ENCODE measurements at regions of chr9 and their contacts with region 1.

Region 1: GRCh38 chr9:124617471-124618141 is 110.4 kb upstream of the NR5A1 start:
- DNase-seq: peak; percentile 77 to 84
- ATAC-seq: peak; percentile 61 to 80 (median 72)
- H3K4me3 ChIP-seq: no peak overlapping the region
- H3K4me3 Mint-ChIP-seq: peak overlapping the region; percentile 80
- H3K27ac ChIP-seq: no peak overlapping the region
- H3K27ac Mint-ChIP-seq: peak overlapping the region; percentile 27 to 86
- H3K4me1 ChIP-seq: peaks cover 31% of the 10 kb centered on the region
- H3K4me1 Mint-ChIP-seq: peaks cover 43 to 47% of the 10 kb centered on the region in 2 donors
- H3K27me3 ChIP-seq: no peaks in the 10 kb centered on the region
- H3K27me3 Mint-ChIP-seq: no peaks in the 10 kb centered on the region
- CTCF ChIP-seq: peak; percentile 77

Region 2: DNA sequence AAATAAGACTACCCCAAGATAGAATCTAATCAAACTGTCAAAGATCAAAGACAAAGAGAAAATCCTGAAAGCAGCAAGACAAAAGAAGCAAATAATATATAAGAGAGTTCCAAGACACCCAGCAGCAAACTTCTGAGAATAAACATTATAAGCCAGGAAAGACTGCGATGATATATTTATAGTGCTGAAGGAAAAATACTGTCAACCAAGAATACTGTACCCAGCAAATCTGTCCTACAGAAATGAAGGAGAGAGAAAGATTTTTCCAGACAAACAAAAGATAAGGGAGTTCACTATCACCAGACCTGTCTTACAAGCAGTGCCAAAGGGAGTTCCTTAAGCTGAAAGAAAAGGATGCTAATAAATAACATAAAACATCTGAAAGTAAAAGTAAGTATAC is 915.1 kb before region 1 on chr9:
- intact Hi-C with region 1: no loop called
- DNase-seq: no peak
- ATAC-seq: no peak
- H3K4me3 ChIP-seq: no peak overlapping the region
- H3K4me3 Mint-ChIP-seq: no peak overlapping the region
- H3K27ac ChIP-seq: no peak overlapping the region
- H3K27ac Mint-ChIP-seq: no peak overlapping the region
- H3K4me1 ChIP-seq: no peaks in the 10 kb centered on the region
- H3K4me1 Mint-ChIP-seq: peaks cover 4 to 5% of the 10 kb centered on the region in 2 donors
- H3K27me3 ChIP-seq: no peaks in the 10 kb centered on the region
- H3K27me3 Mint-ChIP-seq: no peaks in the 10 kb centered on the region
- CTCF ChIP-seq: no peak

Region 3: DNA sequence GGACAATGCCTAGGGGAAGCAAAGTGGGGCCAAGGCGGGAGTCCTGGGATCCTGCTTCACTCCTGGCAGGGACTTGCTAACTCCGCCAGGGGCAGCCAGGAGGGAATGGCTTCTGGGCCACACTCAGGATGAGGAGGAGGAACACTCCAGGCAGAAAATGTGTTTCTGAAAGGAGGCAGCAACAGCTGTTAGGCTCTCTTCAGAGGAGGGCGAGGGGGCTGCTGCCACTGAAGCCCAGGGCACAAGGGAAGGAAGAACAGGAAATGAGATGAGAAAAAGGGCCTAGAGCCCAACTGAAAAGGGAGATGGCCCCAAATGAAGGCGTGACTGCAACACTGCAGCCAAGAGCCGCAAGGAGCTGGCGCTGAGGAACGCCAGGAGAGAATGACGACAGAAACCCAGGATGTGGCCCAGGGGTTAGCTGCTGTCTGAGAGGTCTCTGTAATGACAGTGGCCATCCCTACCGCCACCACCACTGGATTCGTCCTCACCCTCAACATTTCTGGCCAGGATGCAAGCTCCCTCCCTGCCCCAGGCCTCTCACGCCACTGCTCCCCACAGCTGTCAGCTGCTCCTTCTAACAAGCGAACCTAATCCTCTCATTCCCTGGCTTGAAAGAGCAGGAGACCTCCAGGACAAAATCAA is 218.2 kb before region 1 on chr9:
- intact Hi-C with region 1: no loop called
- DNase-seq: no peak
- ATAC-seq: no peak
- H3K4me3 ChIP-seq: no peak overlapping the region
- H3K4me3 Mint-ChIP-seq: no peak overlapping the region
- H3K27ac ChIP-seq: no peak overlapping the region
- H3K27ac Mint-ChIP-seq: peak overlapping the region in 1 of 2 donors; percentile 69
- H3K4me1 ChIP-seq: no peaks in the 10 kb centered on the region
- H3K4me1 Mint-ChIP-seq: peaks cover 24 to 45% of the 10 kb centered on the region in 2 donors
- H3K27me3 ChIP-seq: no peaks in the 10 kb centered on the region
- H3K27me3 Mint-ChIP-seq: no peaks in the 10 kb centered on the region
- CTCF ChIP-seq: no peak

Region 4: DNA sequence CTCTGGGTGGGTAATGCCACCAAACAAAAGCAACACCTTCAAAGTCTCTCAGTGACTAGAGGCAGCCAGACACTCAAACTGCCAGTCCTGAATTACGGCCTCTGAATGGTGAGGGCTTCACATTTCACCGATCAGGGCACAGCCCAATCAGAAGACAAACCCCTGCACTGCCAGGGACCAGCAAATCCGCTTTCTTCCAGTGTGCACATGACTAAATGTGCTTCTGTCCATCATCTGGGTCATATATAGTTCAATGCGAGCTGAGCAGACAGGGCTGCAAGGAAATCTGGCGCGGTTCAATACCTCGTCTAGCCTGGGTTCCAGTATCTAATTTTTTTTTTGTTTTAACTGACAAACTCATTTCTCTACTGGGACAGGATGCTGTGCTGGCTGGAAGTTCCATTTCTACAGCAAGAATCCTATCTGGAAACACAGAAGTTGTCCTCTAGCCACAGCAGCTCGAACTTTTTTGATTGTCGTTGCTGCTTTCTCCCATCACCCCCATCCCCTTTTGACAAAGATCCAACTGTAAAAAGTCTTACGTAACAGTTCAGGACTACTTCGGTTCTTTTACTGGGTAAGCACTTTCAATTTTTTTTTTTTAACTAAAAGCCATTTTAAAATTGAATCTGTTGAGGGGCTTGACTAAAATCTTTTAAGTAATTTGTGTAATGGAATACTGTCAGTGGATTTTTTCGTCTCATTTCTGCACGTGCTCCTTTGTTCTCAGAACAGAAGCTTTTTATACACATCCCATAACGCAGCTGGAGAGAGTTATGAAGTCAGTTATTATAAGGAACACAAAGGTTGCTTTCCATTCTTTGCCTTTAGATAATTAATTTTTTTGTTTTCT is 40.8 kb after region 1 on chr9:
- intact Hi-C with region 1: loop called (anchors 1 kb)
- DNase-seq: peak; percentile 57 to 68
- ATAC-seq: peak; percentile 87 to 93 (median 92)
- H3K4me3 ChIP-seq: peak overlapping the region; percentile 51
- H3K4me3 Mint-ChIP-seq: peak overlapping the region; percentile 99
- H3K27ac ChIP-seq: peak overlapping the region; percentile 77
- H3K27ac Mint-ChIP-seq: peak overlapping the region; percentile 97 to 98
- H3K4me1 ChIP-seq: peaks cover 11% of the 10 kb centered on the region
- H3K4me1 Mint-ChIP-seq: peaks cover 77 to 91% of the 10 kb centered on the region in 2 donors
- H3K27me3 ChIP-seq: no peaks in the 10 kb centered on the region
- H3K27me3 Mint-ChIP-seq: no peaks in the 10 kb centered on the region
- CTCF ChIP-seq: no peak

Region 5: DNA sequence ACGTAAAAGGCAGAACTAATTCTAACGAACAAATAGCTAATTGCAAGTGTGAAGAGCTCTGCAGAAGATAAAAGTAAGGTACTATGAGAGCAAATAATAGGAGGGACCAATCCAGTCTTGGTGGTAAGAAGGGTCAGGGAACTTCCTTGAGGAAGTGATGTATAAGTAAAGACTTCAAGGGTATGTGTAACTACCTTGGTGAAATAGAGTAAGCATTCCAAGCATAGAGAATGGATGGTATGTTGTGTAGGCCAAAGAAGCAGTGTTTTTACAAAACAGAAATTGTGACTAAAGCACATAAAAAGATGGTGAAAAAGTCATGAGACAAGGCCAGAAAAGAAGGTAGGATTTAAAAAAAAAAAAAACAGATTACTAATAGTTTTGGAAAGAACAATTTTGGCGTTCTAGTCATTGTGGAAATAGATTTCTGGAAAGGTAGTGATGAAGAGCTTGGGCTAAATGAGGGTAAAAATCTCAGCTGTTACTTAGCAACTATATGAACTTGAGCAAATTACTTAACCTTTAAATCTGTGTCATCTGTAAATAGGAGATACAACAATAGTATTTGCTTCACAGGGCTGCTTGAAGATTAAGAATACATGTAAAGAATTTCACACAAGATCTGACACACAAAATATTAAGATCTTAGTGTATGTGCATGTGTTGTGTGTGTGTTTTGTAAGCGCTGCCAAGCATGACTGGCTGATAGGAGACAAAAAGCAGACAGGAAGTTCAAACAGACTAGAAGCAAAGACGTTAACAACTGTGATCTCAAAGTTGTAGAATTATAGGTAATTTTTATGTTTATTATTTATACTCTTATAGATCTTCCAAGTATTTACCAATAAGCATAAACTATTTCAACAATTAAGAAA is 80.0 kb after region 1 on chr9:
- intact Hi-C with region 1: no loop called
- DNase-seq: no peak
- ATAC-seq: peak in 1 of 3 donors; percentile 37
- H3K4me3 ChIP-seq: no peak overlapping the region
- H3K4me3 Mint-ChIP-seq: no peak overlapping the region
- H3K27ac ChIP-seq: no peak overlapping the region
- H3K27ac Mint-ChIP-seq: peak overlapping the region; percentile 56 to 72
- H3K4me1 ChIP-seq: peaks cover 6% of the 10 kb centered on the region
- H3K4me1 Mint-ChIP-seq: peaks cover 41 to 45% of the 10 kb centered on the region in 2 donors
- H3K27me3 ChIP-seq: no peaks in the 10 kb centered on the region
- H3K27me3 Mint-ChIP-seq: no peaks in the 10 kb centered on the region
- CTCF ChIP-seq: no peak

Region 6: GRCh38 chr9:124708633-124709291 is 91.2 kb after region 1 on chr9:
- intact Hi-C with region 1: loop called (anchors 1 kb)
- DNase-seq: no peak
- ATAC-seq: no peak
- H3K4me3 ChIP-seq: no peak overlapping the region
- H3K4me3 Mint-ChIP-seq: no peak overlapping the region
- H3K27ac ChIP-seq: no peak overlapping the region
- H3K27ac Mint-ChIP-seq: peak overlapping the region; percentile 0 to 25
- H3K4me1 ChIP-seq: no peaks in the 10 kb centered on the region
- H3K4me1 Mint-ChIP-seq: peaks cover 26 to 39% of the 10 kb centered on the region in 2 donors
- H3K27me3 ChIP-seq: no peaks in the 10 kb centered on the region
- H3K27me3 Mint-ChIP-seq: no peaks in the 10 kb centered on the region
- CTCF ChIP-seq: no peak

Region 7: GRCh38 chr9:124852829-124853531 is 235.4 kb after region 1 on chr9 and contains the start of gene WDR38:
- intact Hi-C with region 1: loop called (anchors 5 kb)
- DNase-seq: peak; percentile 88 to 93
- ATAC-seq: peak; percentile 90 to 96 (median 95)
- H3K4me3 ChIP-seq: peak within 1 kb of the TSS; percentile 27
- H3K4me3 Mint-ChIP-seq: peak within 1 kb of the TSS; percentile 82
- H3K27ac ChIP-seq: peak within 1 kb of the TSS; percentile 87
- H3K27ac Mint-ChIP-seq: peak within 1 kb of the TSS; percentile 86 to 89
- H3K4me1 ChIP-seq: peaks cover 23% of the 10 kb centered on the region
- H3K4me1 Mint-ChIP-seq: peaks cover 13 to 24% of the 10 kb centered on the region in 2 donors
- H3K27me3 ChIP-seq: peaks cover 3% of the 10 kb centered on the region
- H3K27me3 Mint-ChIP-seq: no peaks in the 10 kb centered on the region
- CTCF ChIP-seq: peak; percentile 99
- total RNA-seq, gene WDR38: not detected

Region 8: DNA sequence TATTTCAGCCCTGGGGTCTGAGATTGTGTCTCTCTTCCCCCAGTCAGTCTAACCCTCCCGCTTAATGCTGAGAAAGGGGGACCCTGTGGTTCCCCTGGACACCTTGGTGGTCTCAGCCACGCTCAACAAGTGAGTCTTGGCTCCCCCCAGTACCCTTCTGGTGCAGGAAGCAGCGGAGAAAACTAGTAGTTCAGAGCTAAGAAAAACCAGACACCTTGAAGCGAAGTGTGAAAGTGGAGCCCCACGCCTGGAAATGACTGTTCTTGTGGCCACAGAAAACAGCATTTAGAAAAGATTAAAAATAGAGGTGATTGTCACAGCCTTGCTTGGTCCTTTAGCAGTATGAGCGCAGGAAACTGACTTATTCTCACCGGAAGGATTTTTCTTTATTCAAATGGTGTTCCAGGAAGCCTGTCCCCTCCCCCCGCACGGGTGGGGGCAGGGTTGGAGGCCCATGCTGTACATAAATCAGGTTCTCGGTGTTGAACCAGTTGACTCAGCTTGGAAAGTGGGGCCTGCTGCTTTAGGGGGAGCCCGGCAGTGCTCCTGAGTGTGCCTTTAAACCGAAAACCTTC is 252.5 kb after region 1 on chr9:
- intact Hi-C with region 1: loop called (anchors 5 kb)
- DNase-seq: peak; percentile 84 to 90
- ATAC-seq: peak; percentile 70 to 84 (median 70)
- H3K4me3 ChIP-seq: peak overlapping the region; percentile 96
- H3K4me3 Mint-ChIP-seq: peak overlapping the region; percentile 97
- H3K27ac ChIP-seq: peak overlapping the region; percentile 96
- H3K27ac Mint-ChIP-seq: peak overlapping the region; percentile 97
- H3K4me1 ChIP-seq: peaks cover 65% of the 10 kb centered on the region
- H3K4me1 Mint-ChIP-seq: peaks cover 60% of the 10 kb centered on the region in 2 donors
- H3K27me3 ChIP-seq: no peaks in the 10 kb centered on the region
- H3K27me3 Mint-ChIP-seq: no peaks in the 10 kb centered on the region
- CTCF ChIP-seq: no peak

Region 9: DNA sequence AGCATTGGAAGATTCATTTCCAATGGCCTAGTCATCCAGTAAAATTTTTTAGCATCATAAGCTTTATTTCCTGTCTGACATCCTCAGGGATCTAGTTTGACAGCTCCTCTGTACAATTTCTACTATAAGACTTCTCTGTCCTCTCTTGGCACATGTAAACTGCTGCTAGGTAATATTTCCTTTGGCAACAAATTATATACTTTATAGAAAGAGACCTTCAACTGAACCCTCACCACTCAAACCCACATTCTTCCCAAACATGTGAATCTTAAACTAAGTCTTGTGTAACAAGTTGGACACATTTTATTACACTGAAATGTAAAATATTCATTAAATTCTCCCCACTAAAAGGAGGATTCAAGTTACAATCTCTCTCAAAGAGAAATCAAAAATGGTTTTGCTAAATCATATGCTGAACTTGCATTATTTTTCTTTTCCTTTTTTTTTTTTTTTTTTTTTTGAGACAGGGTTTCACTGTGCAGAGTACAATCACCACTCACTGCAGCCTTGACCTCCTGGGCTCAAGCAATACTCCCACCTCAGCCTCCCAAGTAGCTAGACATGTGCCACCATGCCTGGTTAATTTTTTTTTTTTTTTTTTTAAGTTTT is 488.8 kb after region 1 on chr9:
- intact Hi-C with region 1: no loop called
- DNase-seq: no peak
- ATAC-seq: no peak
- H3K4me3 ChIP-seq: no peak overlapping the region
- H3K4me3 Mint-ChIP-seq: no peak overlapping the region
- H3K27ac ChIP-seq: no peak overlapping the region
- H3K27ac Mint-ChIP-seq: no peak overlapping the region
- H3K4me1 ChIP-seq: no peaks in the 10 kb centered on the region
- H3K4me1 Mint-ChIP-seq: peaks cover 6 to 24% of the 10 kb centered on the region in 2 donors
- H3K27me3 ChIP-seq: no peaks in the 10 kb centered on the region
- H3K27me3 Mint-ChIP-seq: no peaks in the 10 kb centered on the region
- CTCF ChIP-seq: no peak